ENCODE measurements at regions of chr16 and their contacts with region 1.

Region 1: DNA sequence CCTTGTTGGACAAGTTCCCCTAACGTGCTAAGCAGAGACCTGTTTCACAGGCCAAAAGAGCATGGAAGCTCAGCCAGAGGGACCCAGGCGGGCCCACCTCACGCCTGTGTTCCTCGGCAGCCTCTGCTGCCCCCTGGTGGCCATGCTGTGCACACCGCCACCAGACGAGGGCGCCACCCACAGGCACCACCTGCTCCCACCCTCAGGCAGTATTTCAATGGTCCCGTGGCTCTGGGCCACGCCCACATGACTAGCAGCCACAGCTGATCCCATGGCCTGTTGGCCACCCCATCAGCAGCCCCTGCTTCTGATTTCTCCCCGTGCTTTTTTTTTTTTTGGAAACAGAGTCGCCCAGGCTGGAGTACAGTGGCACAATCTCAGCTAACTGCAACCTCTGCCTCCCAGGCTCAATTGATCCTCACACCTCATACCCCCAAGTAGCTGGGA is 18.9 kb downstream of the MPG start:
- DNase-seq: peak; percentile 88
- H3K4me3 Mint-ChIP-seq: no peak overlapping the region
- H3K27ac Mint-ChIP-seq: no peak overlapping the region
- H3K4me1 Mint-ChIP-seq: no peaks in the 10 kb centered on the region
- H3K27me3 Mint-ChIP-seq: no peaks in the 10 kb centered on the region

Region 2: DNA sequence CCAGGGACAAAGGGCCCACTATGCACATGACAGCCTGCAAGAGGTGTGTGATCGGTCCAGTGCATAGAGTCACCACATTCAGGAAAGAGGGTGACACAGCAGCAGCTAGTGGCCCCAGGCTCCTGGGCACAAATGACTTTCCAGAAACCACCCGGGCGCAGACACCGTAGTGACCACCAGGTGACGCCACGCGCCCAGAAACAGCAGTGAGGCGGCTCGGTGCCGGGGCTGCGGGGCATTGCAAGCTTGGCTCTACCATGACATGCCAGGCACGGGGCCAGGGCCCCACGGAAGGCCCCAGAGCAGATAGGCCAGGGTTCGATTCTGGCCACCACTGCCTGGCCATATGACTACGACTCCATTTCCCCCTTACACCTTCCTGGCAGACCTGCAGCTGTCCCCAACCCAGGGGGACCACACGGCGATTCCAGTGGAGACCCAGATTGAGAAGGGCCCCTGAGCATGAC is 31.3 kb before region 1 on chr16:
- intact Hi-C with region 1: loop called (anchors 1 kb)
- DNase-seq: peak; percentile 76
- H3K4me3 Mint-ChIP-seq: no peak overlapping the region
- H3K27ac Mint-ChIP-seq: no peak overlapping the region
- H3K4me1 Mint-ChIP-seq: peaks cover 7% of the 10 kb centered on the region
- H3K27me3 Mint-ChIP-seq: peaks cover 21% of the 10 kb centered on the region

Region 3: GRCh38 chr16:71533-72341 is 25.2 kb before region 1 on chr16:
- intact Hi-C with region 1: loop called (anchors 1 kb)
- DNase-seq: no peak
- H3K4me3 Mint-ChIP-seq: no peak overlapping the region
- H3K27ac Mint-ChIP-seq: no peak overlapping the region
- H3K4me1 Mint-ChIP-seq: peaks cover 10% of the 10 kb centered on the region
- H3K27me3 Mint-ChIP-seq: peaks cover 52% of the 10 kb centered on the region

Region 4: DNA sequence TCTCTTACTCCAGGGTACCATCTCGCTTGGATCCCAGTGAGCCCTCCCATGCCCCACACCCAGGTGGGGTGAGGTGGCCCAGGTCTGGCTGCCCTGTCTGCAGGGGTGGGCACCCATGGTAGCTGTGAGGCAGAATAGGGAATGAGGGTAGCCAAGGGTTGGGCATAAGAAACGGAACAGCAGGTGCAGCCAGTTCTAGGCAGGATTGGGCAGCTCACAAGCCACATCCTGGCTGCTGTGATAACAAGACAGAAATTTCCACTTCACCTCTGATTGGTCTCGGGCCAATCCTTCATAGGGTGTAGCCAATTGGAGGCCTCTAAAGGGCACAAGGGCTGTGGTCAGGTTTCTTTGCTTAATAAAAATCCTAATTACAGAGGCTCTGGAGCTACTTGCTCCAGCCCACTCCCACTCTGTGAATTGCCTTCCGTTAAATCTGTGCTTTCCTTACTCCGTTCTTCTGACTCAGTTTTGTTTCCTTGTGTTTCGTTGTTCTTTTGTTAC is 182.0 kb after region 1 on chr16:
- intact Hi-C with region 1: no loop called
- DNase-seq: peak; percentile 52
- H3K4me3 Mint-ChIP-seq: no peak overlapping the region
- H3K27ac Mint-ChIP-seq: no peak overlapping the region
- H3K4me1 Mint-ChIP-seq: peaks cover 5% of the 10 kb centered on the region
- H3K27me3 Mint-ChIP-seq: peaks cover 33% of the 10 kb centered on the region

Region 5: DNA sequence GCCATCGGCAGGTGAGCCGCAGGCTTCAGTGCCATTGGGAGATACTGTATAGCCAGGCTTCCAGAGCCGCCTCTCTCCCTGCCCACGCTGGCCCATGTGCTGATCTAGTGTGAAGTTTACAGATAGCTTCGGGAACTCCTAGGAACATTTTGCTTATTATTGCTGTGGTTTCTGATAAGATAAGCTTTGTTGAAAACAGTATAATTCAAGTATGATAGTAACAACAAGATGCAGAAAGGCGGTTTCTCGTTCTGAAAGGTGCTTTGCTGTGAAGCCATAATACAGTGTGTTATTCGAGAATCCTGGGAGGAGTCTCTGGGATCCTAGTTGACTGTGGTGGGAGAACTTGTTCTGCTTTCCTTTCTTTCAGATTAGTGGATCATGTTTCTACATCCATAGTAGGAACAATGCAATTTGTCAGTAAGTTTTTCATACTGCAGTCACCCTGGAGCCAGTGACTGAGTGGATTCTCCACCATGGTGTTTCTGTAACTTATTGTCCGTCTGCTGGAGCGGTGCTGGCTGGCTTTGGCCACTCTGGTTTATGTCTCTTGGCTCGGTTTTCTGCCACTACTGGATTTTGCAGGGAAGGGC is 360.0 kb after region 1 on chr16:
- intact Hi-C with region 1: no loop called
- DNase-seq: no peak
- H3K4me3 Mint-ChIP-seq: no peak overlapping the region
- H3K27ac Mint-ChIP-seq: no peak overlapping the region
- H3K4me1 Mint-ChIP-seq: peaks cover 4% of the 10 kb centered on the region
- H3K27me3 Mint-ChIP-seq: no peaks in the 10 kb centered on the region